PC-3 (cell line): ENCODE measurements at regions of chr19 and their contacts with region 1.

Region 1: GRCh38 chr19:14432791-14433553 is at the start of gene PKN1:
- DNase-seq: peak; percentile 46
- ATAC-seq: peak; percentile 21
- H3K4me3 ChIP-seq: peak within 1 kb of the TSS; percentile 84
- H3K27ac ChIP-seq: peak within 1 kb of the TSS; percentile 60
- H3K4me1 ChIP-seq: peaks cover 24% of the 10 kb centered on the region
- H3K27me3 ChIP-seq: no peaks in the 10 kb centered on the region
- CTCF ChIP-seq: no peak
- total RNA-seq, gene PKN1: 186 and 238 TPM in 2 replicates

Region 2: DNA sequence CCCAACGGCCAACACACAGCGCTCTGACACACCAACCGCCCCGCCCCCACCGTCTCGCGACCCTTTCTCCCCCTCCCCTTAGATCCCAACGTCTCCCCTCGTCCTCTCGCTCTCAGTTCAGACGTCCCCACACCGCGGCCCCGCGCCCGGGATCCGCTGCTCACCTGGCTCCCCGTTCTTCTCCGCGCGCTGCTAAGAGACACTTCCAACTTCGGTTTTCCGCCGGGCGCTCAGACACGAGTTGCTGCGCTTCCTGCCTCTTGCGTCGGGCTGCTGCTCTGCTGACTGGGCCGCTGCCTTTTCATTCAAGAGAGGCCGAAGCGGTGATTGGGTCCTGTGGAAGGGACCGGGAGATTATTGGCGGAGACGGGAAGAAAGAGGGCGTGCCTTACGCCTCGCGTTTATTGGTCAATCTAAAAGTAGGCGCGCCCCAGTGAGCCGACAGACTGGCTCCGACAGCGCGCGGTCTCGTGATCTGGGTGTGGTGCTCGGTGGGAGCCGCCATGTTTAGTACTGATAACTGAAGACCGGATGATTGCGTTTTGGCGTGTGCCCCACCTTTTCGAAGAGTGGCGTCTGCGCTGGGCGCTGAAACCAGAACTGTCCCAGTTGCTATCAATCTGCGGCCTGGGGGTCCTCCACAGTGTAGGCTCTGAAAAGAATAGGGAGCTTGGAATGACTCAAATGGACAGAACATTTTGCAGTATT is 13.7 kb before region 1 on chr19 and contains the start of gene DDX39A:
- CTCF ChIA-PET with region 1: no interaction called
- POLR2A ChIA-PET with region 1: no interaction called
- intact Hi-C with region 1: loop called (anchors 2 kb)
- DNase-seq: peak; percentile 100
- ATAC-seq: peak; percentile 98
- H3K4me3 ChIP-seq: peak within 1 kb of the TSS; percentile 98
- H3K27ac ChIP-seq: peak within 1 kb of the TSS; percentile 83
- H3K4me1 ChIP-seq: peaks cover 23% of the 10 kb centered on the region
- H3K27me3 ChIP-seq: no peaks in the 10 kb centered on the region
- CTCF ChIP-seq: no peak
- total RNA-seq, gene DDX39A: 308 and 311 TPM in 2 replicates

Region 3: GRCh38 chr19:14450168-14450874 is 17.3 kb after region 1 on chr19:
- CTCF ChIA-PET with region 1: no interaction called
- POLR2A ChIA-PET with region 1: interaction called, 33 read pairs
- intact Hi-C with region 1: no loop called
- DNase-seq: peak; percentile 67
- ATAC-seq: peak; percentile 75
- H3K4me3 ChIP-seq: no peak overlapping the region
- H3K27ac ChIP-seq: no peak overlapping the region
- H3K4me1 ChIP-seq: no peaks in the 10 kb centered on the region; the same call in 1 of the 2 replicates
- H3K27me3 ChIP-seq: no peaks in the 10 kb centered on the region
- CTCF ChIP-seq: no peak